Activated B cell treated with CpG ODN at 0.5 μM for 24 hours (primary cell): ENCODE measurements at regions of chr11 and their contacts with region 1.

Region 1: DNA sequence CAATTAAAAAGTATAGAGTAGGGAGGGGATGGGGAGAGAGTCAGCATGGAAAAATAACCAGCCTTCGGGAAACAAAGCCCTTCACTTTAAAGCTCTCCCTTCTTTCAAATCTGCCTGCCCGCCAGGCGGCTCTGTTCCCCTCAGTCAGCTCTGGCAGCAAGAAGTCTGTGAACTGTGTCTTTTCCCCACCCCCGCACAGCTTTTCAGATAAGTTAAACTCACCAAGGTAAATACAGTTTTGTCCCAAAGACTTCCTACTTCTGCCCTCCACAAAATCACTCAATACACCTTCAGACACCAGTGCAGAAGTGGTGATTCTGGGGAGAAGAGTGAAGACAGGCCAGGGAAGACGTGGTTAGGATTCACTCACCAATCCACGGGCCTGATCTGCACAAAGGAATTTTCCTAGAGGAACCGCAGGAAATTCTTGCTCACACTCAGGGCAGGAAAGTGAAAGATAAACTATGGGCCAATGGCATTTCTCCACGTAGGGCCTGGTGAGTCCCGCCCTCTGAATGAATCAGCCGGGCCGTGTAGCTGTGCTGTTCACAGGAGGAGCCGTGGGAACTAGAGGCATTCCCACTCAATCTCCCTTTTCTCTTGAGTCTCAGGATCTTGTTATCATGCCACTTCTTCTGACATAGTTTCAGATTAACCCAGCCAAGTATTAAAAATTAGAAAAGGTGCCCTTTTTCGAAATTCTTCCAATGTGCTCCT is at the start of gene TRIM5:
- DNase-seq: peak; percentile 58
- ATAC-seq: peak; percentile 77
- H3K4me3 Mint-ChIP-seq: peak within 1 kb of the TSS; percentile 93
- H3K27ac Mint-ChIP-seq: peak within 1 kb of the TSS; percentile 93
- H3K4me1 Mint-ChIP-seq: peaks cover 54% of the 10 kb centered on the region
- H3K27me3 Mint-ChIP-seq: no peaks in the 10 kb centered on the region
- CTCF ChIP-seq: no peak
- total RNA-seq, gene TRIM5: 34.3 and 36.3 TPM in 2 replicates

Region 2: DNA sequence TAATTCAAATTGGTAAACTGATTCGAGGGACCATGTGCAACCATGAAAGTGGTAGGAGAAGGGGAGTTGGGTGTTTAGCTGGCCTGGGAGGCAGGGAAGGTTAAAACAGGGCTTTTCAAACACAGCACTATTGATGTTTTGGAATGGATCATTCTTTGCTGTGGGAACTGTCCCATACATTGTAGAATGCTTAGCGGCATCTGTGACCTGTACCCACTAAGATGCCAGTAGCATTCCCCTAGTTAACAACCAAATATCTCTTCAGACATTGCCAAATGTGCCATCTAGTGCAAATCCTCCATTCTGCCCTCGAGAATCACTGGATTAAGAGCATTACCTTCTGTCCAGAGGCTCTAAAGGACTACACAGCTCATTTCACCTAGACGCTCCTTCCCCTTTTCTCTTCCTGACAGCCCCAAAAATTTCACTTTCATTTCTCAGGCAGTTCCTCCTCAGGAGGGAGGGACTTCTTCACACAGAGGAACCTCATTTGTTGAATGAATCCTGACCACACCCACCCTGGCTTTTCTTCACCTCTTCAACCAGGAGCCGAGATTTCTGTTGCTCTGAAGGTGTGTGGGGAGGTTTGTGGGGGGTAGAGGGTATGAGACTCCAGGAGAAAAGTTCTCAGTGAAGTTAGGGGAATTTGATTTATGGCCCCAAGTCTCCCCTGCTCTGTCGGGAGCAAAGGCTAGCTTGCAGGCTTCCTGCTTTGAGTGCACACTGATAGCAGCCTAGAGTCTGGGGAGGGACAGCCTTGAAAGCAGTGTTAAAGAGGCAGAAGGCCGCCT is 60.1 kb before region 1 on chr11 and contains the start of gene TRIM34:
- CTCF ChIA-PET with region 1: interaction called, 4 read pairs
- POLR2A ChIA-PET with region 1: interaction called, 21 read pairs
- intact Hi-C with region 1: loop called (anchors 1 kb)
- DNase-seq: peak; percentile 35
- ATAC-seq: peak; percentile 98
- H3K4me3 Mint-ChIP-seq: peak within 1 kb of the TSS; percentile 94
- H3K27ac Mint-ChIP-seq: peak within 1 kb of the TSS; percentile 96
- H3K4me1 Mint-ChIP-seq: peaks cover 46% of the 10 kb centered on the region
- H3K27me3 Mint-ChIP-seq: no peaks in the 10 kb centered on the region
- CTCF ChIP-seq: no peak
- total RNA-seq, gene TRIM34: 25.9 and 28.7 TPM in 2 replicates

Region 3: DNA sequence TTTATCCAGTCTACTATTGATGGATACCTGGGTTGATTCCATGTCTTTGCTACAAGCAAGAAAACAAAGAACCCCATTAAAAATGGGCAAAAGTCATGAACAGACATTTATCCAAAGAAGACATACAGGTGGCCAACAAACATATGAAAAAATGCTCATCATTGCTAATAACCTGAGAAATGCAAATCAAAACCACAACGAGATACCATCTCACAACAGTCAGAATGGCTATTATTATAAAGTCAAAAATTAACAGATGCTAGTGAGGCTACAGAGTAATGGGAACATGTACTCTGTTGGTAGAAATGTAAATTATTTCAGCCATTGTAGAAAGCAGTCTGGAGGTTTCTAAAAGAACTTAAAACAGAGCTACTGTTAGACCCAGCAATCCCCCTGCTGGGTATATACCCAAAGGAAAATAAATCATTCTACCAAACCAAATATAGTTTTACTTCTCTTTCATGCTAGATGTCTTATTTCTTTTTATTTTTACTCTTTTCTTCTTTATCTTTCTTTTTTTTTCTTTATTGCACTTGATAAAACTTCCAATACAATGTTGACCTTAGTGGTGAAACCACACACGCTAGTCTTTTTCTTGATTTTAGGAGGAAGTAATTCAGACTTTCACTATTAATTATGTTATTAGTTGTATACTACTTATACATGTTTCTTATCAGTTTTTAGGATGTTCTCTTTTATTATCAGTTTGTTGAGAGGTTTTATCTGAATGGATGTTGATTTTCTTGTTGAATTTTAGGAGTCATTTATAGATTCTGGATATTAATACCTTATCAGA is 19.1 kb after region 1 on chr11:
- CTCF ChIA-PET with region 1: interaction called, 23 read pairs
- POLR2A ChIA-PET with region 1: interaction called, 60 read pairs
- intact Hi-C with region 1: loop called (anchors 1 kb)
- DNase-seq: no peak
- ATAC-seq: peak; percentile 41
- H3K4me3 Mint-ChIP-seq: no peak overlapping the region
- H3K27ac Mint-ChIP-seq: peak overlapping the region; percentile 66
- H3K4me1 Mint-ChIP-seq: peaks cover 39% of the 10 kb centered on the region
- H3K27me3 Mint-ChIP-seq: no peaks in the 10 kb centered on the region
- CTCF ChIP-seq: no peak

Region 4: DNA sequence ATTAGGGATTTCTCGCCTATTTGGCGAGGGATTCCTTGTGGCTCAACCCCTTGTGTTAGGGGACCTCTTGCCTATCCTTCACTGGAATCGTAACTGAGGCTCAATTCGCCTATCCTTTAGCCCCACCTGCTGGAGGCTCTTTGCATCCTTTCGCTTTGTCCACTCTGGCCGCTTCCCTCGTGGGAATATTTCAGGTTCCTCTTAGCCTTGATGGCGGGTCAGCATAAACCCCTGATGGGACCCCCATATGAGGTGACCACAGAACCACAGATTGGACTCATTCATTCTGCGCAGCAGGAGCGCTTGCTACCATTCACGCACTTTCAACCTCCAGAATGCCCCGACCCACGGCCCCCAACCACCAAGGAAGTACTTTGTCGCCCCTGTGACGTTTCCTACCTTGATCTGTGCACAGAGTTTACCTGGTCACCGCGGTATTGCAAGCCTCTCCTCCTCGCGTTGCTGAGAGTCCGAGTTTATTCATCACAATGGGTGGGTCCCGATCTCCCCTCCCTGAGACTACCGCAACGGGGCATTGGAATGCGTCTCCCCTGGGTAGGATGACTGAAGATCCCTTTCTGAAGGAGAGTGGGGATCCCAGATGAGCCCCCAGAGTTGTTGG is 123.8 kb after region 1 on chr11 and contains the start of gene OR52N2:
- CTCF ChIA-PET with region 1: interaction called, 20 read pairs
- POLR2A ChIA-PET with region 1: interaction called, 5 read pairs
- intact Hi-C with region 1: loop called (anchors 1 kb)
- DNase-seq: peak; percentile 58
- ATAC-seq: peak; percentile 82
- H3K4me3 Mint-ChIP-seq: peak within 1 kb of the TSS; percentile 87
- H3K27ac Mint-ChIP-seq: no peak within 1 kb of the TSS
- H3K4me1 Mint-ChIP-seq: peaks cover 11% of the 10 kb centered on the region
- H3K27me3 Mint-ChIP-seq: peaks cover 12% of the 10 kb centered on the region
- CTCF ChIP-seq: no peak
- total RNA-seq, gene OR52N2: not detected in 2 replicates

Region 5: GRCh38 chr11:6234387-6235107 is 549.7 kb after region 1 on chr11 and contains the start of gene FHIP1B:
- CTCF ChIA-PET with region 1: no interaction called
- POLR2A ChIA-PET with region 1: no interaction called
- intact Hi-C with region 1: loop called (anchors 1 kb)
- DNase-seq: peak; percentile 95
- ATAC-seq: peak; percentile 93
- H3K4me3 Mint-ChIP-seq: peak within 1 kb of the TSS; percentile 99
- H3K27ac Mint-ChIP-seq: peak within 1 kb of the TSS; percentile 92
- H3K4me1 Mint-ChIP-seq: peaks cover 32% of the 10 kb centered on the region
- H3K27me3 Mint-ChIP-seq: peaks cover 3% of the 10 kb centered on the region
- CTCF ChIP-seq: no peak
- total RNA-seq, gene FHIP1B: 27.7 and 32.8 TPM in 2 replicates